ENCODE measurements at regions of chr16 and their contacts with region 1.

Region 1: GRCh38 chr16:77344341-77344740 is 90.5 kb downstream of the ADAMTS18 start:
- DNase-seq: peak; percentile 55
- H3K4me3 ChIP-seq: no peak overlapping the region
- H3K27ac ChIP-seq: no peak overlapping the region
- H3K4me1 ChIP-seq: no peaks in the 10 kb centered on the region
- H3K27me3 ChIP-seq: no peaks in the 10 kb centered on the region
- CTCF ChIP-seq: no peak

Region 2: GRCh38 chr16:77376358-77376757 is 32.0 kb after region 1 on chr16:
- CTCF ChIA-PET with region 1: no interaction called
- dilution Hi-C with region 1: loop called (anchors 5 kb)
- in situ Hi-C with region 1: no loop called
- intact Hi-C with region 1: no loop called
- DNase-seq: no peak
- H3K4me3 ChIP-seq: no peak overlapping the region
- H3K27ac ChIP-seq: no peak overlapping the region
- H3K4me1 ChIP-seq: no peaks in the 10 kb centered on the region
- H3K27me3 ChIP-seq: no peaks in the 10 kb centered on the region
- CTCF ChIP-seq: no peak

Measured in mammary epithelial cell (primary cell).